ENCODE measurements at regions of chr1 and their contacts with region 1.

Region 1: GRCh38 chr1:86380257-86380861 is 15.8 kb downstream of the ODF2L start:
- DNase-seq: no peak
- ATAC-seq: peak; percentile 57 to 68

Region 2: DNA sequence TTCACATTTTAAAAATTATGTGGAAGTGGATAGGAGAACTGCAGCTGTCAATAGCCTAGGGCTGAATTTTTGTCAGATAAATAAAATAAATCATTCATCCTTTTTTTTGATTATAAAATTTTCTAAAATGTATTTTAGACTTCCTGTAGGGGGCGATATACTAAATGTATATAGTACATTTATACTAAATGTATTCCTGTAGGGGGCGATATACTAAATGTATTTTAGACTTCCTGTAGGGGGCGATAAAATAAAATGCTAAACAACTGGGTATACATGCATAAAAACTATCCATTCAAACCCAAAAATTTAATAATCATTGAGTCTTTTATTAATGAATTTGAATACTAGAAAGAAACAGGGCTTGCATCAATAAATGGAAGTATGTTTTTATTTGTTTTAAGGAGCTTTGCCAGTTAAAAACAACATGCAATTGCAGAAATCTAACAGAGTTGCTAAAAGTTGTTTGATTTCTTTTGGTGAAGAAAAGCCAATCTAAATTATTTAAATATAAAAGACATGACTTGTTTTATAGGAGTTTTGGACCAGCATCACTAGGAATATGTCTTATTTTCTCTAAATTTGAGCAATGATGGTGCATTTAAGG is 119.7 kb after region 1 on chr1:
- intact Hi-C with region 1: loop called in 1 of 2 experiments (anchors 2 kb)
- DNase-seq: no peak
- ATAC-seq: no peak

Region 3: GRCh38 chr1:86687595-86687994 is 307.2 kb after region 1 on chr1:
- intact Hi-C with region 1: loop called in 1 of 2 experiments (anchors 5 kb)
- DNase-seq: no peak
- ATAC-seq: no peak

Region 4: DNA sequence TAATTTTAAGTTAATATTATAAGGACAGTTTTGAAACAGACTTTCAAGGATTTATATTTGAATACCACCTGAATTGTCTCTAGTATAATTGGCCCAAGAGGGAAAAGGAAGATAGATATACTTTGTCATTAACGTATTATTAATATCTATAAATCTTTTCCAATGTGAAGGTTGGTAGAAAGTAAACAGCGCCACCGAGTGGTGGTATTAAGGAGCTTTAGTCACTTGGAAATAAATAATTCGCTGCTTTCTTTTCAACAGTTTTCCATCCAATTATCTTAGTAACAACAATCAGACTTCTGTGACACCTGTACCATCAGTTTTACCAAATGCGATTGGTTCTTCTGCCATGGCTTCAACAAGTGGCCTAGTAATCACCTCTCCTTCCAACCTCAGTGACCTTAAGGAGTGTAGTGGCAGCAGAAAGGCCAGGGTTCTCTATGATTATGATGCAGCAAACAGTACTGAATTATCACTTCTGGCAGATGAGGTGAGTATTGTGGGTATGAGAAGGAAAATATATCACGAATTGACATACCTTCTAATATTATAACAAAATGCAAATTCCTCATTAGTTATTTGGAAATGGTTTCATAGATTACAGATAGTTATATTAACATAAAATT is 361.7 kb after region 1 on chr1:
- intact Hi-C with region 1: loop called in 1 of 2 experiments (anchors 5 kb)
- DNase-seq: no peak
- ATAC-seq: no peak

Region 5: GRCh38 chr1:87084244-87084836 is 704.0 kb after region 1 on chr1:
- intact Hi-C with region 1: loop called in 1 of 2 experiments (anchors 10 kb)
- DNase-seq: no peak
- ATAC-seq: peak in 1 of 2 donors; percentile 27

Measured in left cardiac atrium (tissue), 4 donors.